Mammary epithelial cell (primary cell): ENCODE measurements at regions of chr12 and their contacts with region 1.

Region 1: GRCh38 chr12:127363392-127363791 is 903.6 kb upstream of the TMEM132C start:
- DNase-seq: peak; percentile 31
- H3K4me3 ChIP-seq: no peak overlapping the region
- H3K27ac ChIP-seq: no peak overlapping the region
- H3K4me1 ChIP-seq: no peaks in the 10 kb centered on the region
- H3K27me3 ChIP-seq: no peaks in the 10 kb centered on the region
- CTCF ChIP-seq: peak; percentile 58 to 75

Region 2: DNA sequence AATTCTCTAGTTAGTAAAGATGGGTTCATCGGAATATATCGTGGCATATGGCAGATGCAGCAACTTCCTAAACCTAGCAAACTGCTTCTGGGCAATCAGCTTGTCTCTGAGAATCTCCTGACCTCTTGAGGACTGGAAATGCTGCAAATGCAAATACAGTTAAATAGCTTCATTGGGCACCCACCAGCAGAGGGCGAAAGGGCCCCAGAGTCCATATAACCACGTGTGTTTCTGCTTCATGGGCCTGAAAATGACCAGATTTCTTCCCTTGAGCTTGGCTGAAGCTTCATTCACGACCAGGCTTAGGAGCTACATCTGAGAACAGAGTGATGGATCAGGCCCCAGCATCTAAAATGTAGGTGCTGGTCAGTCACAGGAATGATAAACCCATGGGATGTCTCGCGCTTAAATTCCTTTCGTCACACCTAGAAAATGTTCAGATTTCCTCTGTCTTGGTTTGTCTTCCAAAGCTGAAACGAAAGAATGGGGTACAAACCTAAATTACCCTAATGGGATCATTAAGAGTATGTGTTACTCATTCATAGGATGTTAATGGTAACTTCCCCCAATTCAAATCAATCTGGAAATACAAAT is 579.0 kb before region 1 on chr12:
- CTCF ChIA-PET with region 1: no interaction called
- dilution Hi-C with region 1: no loop called
- in situ Hi-C with region 1: no loop called
- intact Hi-C with region 1: loop called (anchors 5 kb)
- DNase-seq: peak; percentile 14
- H3K4me3 ChIP-seq: no peak overlapping the region
- H3K27ac ChIP-seq: no peak overlapping the region
- H3K4me1 ChIP-seq: no peaks in the 10 kb centered on the region
- H3K27me3 ChIP-seq: no peaks in the 10 kb centered on the region
- CTCF ChIP-seq: peak; percentile 39 to 48

Region 3: GRCh38 chr12:126874427-126875026 is 488.9 kb before region 1 on chr12:
- CTCF ChIA-PET with region 1: interaction called, 20 read pairs
- dilution Hi-C with region 1: no loop called
- in situ Hi-C with region 1: no loop called
- intact Hi-C with region 1: no loop called
- DNase-seq: peak; percentile 21
- H3K4me3 ChIP-seq: no peak overlapping the region
- H3K27ac ChIP-seq: no peak overlapping the region
- H3K4me1 ChIP-seq: no peaks in the 10 kb centered on the region
- H3K27me3 ChIP-seq: no peaks in the 10 kb centered on the region
- CTCF ChIP-seq: peak; percentile 87 to 96

Region 4: DNA sequence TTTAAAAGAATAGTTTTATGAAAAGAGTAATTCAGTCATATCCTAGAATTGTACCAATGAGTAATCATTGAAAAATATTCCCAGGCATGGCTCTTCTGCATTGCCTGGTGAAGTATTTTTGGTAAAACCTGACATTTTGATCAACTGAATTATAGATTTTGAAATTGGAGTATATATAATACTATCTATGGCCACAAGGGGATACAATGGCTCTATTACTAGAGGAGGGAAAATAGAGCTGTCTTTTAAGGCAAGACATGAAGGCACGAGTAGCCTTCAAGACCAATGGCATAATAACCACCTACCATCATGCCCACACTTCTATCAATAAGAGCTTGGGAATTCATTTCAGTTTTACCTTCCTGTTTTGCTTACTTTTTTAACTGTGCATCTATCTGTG is 337.8 kb before region 1 on chr12:
- CTCF ChIA-PET with region 1: interaction called, 4 read pairs
- dilution Hi-C with region 1: no loop called
- in situ Hi-C with region 1: no loop called
- intact Hi-C with region 1: loop called (anchors 2 kb)
- DNase-seq: no peak
- H3K4me3 ChIP-seq: no peak overlapping the region
- H3K27ac ChIP-seq: no peak overlapping the region
- H3K4me1 ChIP-seq: no peaks in the 10 kb centered on the region
- H3K27me3 ChIP-seq: no peaks in the 10 kb centered on the region
- CTCF ChIP-seq: peak; percentile 50 to 58

Region 5: DNA sequence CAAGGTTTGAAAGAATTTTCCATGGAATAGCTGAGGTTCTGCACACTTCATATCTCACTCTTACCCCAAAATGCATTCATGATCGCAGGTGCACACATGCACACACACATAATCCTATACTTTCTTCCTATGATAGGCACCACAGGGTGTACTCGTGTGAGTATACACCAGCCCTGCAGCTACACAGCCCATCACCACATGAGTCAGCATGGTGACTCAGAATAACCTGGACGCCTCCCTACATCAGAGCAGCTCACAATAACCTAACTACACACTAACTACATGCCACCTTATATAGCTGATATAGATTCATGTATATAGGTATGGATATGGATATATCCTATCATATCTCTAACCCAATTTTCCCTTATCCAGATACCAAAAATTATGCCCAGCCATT is 53.4 kb after region 1 on chr12:
- CTCF ChIA-PET with region 1: no interaction called
- dilution Hi-C with region 1: no loop called
- in situ Hi-C with region 1: no loop called
- intact Hi-C with region 1: no loop called
- DNase-seq: peak; percentile 66
- H3K4me3 ChIP-seq: no peak overlapping the region
- H3K27ac ChIP-seq: no peak overlapping the region
- H3K4me1 ChIP-seq: no peaks in the 10 kb centered on the region
- H3K27me3 ChIP-seq: no peaks in the 10 kb centered on the region
- CTCF ChIP-seq: no peak

Region 6: DNA sequence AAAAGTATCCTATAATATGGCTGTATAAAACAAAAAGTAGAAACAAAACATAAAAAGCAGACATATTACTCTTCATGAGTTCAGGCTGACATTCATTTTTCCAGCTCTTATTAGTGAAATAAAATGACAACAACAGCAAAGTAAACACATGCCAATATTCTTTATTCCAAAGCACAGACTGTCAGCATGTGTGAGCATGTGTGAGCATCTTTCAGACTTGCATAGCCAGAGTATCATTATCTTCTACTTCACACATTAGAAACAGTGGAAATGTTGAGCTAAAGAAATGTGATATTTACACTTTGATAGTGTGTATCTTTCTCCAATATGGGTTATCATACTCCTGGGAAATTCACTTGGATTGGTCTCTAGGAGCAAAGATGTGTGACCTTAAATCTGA is 427.0 kb after region 1 on chr12:
- CTCF ChIA-PET with region 1: no interaction called
- dilution Hi-C with region 1: no loop called
- in situ Hi-C with region 1: no loop called
- intact Hi-C with region 1: no loop called
- DNase-seq: no peak
- H3K4me3 ChIP-seq: no peak overlapping the region
- H3K27ac ChIP-seq: no peak overlapping the region
- H3K4me1 ChIP-seq: no peaks in the 10 kb centered on the region
- H3K27me3 ChIP-seq: no peaks in the 10 kb centered on the region
- CTCF ChIP-seq: no peak